Aorta (tissue), 5 donors: ENCODE measurements at regions of chr16 and their contacts with region 1.

Region 1: DNA sequence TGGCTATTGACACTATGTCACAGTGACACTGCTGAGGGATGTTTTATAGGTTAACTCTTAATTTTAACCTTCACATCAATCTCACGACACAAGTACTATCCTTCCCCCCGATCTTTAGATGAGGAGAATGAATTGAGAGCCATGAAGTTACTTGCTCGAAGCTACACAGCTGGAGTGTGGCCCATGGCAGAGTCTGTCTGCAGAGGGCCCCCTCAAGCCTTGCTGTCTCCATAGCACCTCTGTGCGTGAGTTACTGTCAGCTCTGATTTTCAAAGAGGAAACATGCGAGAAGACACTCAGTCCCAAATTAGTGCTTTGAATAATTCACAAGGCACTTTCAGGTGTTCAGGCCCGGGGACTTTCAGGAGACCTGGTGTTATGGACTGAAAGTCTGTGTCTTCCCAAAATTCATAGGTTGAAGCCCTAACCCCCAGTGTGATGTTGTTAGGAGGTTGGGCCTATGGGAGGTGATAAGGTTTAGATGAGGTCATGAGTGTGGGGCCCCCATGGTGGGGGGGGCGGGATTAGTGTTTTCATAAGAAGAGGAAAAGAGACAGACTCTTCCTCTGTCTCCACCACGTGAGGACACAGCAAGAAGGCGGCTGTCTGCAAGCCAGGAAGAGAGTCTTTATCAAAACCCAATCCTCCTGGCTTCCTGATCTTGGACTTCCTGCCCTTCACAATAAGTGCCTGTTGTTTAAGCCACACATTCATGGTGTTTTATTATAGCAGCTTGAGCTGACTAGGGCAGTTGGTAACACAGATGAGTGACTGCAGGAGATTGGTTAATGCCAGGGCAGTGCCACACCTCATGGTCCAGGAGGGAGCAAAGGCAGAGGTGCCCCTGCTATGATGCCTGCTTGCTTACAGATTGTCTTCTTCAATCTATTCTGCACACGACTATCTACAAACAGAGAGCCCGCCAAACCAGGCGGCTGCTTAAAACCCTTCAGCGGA is 281.8 kb downstream of the HAPSTR1 start:
- DNase-seq: no peak
- ATAC-seq: no peak
- H3K4me3 ChIP-seq: no peak overlapping the region
- H3K27ac ChIP-seq: no peak overlapping the region
- H3K4me1 ChIP-seq: no peaks in the 10 kb centered on the region
- H3K27me3 ChIP-seq: no peaks in the 10 kb centered on the region

Region 2: DNA sequence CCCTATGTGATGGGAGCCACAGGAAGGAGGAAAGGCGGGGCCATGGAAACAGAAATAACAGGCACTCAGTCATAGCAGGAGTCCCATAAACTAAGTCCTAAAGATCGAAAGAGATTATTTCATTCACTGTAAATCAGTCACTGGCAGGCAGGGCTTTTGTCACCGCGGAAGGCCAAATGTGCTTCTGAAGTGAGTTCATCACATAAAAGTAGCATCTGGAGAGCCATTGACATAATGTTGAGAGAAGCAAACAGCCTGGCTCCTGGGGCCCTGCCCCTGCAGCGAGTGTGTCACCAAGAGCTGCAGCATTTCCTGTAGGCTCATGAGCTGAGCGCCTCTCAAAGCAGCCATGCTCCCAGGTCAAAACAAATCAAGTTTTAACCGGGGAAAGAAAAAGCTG is 194.5 kb after region 1 on chr16:
- intact Hi-C with region 1: loop called in 1 of 2 experiments (anchors 10 kb)
- DNase-seq: no peak
- ATAC-seq: no peak
- H3K4me3 ChIP-seq: no peak overlapping the region
- H3K27ac ChIP-seq: no peak overlapping the region
- H3K4me1 ChIP-seq: no peaks in the 10 kb centered on the region
- H3K27me3 ChIP-seq: no peaks in the 10 kb centered on the region